ENCODE measurements at regions of chr12 and their contacts with region 1.

Region 1: GRCh38 chr12:113221181-113221997 is at the start of gene TPCN1:
- DNase-seq: peak; percentile 100
- H3K4me3 Mint-ChIP-seq: peak within 1 kb of the TSS; percentile 95
- H3K27ac Mint-ChIP-seq: peak within 1 kb of the TSS; percentile 92
- H3K4me1 Mint-ChIP-seq: peaks cover 19% of the 10 kb centered on the region
- H3K27me3 Mint-ChIP-seq: no peaks in the 10 kb centered on the region
- CTCF ChIP-seq: no peak
- total RNA-seq, gene TPCN1: 42.7 and 43.0 TPM in 2 replicates

Region 2: GRCh38 chr12:113184900-113185773 is 36.3 kb before region 1 on chr12 and contains the starts of genes DDX54 and RITA1:
- CTCF ChIA-PET with region 1: no interaction called
- POLR2A ChIA-PET with region 1: interaction called, 32 read pairs
- intact Hi-C with region 1: no loop called
- DNase-seq: peak; percentile 91
- H3K4me3 Mint-ChIP-seq: peak within 1 kb of the TSS; percentile 91
- H3K27ac Mint-ChIP-seq: peak within 1 kb of the TSS; percentile 94
- H3K4me1 Mint-ChIP-seq: peaks cover 15% of the 10 kb centered on the region
- H3K27me3 Mint-ChIP-seq: no peaks in the 10 kb centered on the region
- CTCF ChIP-seq: no peak
- total RNA-seq, gene DDX54: 67.3 and 75.8 TPM in 2 replicates
- total RNA-seq, gene RITA1: 17.5 and 17.9 TPM in 2 replicates

Region 3: GRCh38 chr12:113196996-113197395 is 24.4 kb before region 1 on chr12:
- CTCF ChIA-PET with region 1: interaction called, 5 read pairs
- POLR2A ChIA-PET with region 1: interaction called, 32 read pairs
- intact Hi-C with region 1: no loop called
- DNase-seq: peak; percentile 88
- H3K4me3 Mint-ChIP-seq: no peak overlapping the region
- H3K27ac Mint-ChIP-seq: no peak overlapping the region
- H3K4me1 Mint-ChIP-seq: peaks cover 15% of the 10 kb centered on the region
- H3K27me3 Mint-ChIP-seq: no peaks in the 10 kb centered on the region
- CTCF ChIP-seq: peak; percentile 66

Region 4: GRCh38 chr12:113241191-113242025 is 20.0 kb after region 1 on chr12:
- CTCF ChIA-PET with region 1: interaction called, 5 read pairs
- POLR2A ChIA-PET with region 1: interaction called, 237 read pairs
- intact Hi-C with region 1: loop called (anchors 1 kb)
- DNase-seq: peak; percentile 92
- H3K4me3 Mint-ChIP-seq: peak overlapping the region; percentile 56
- H3K27ac Mint-ChIP-seq: peak overlapping the region; percentile 95
- H3K4me1 Mint-ChIP-seq: peaks cover 59% of the 10 kb centered on the region
- H3K27me3 Mint-ChIP-seq: no peaks in the 10 kb centered on the region
- CTCF ChIP-seq: no peak

Region 5: DNA sequence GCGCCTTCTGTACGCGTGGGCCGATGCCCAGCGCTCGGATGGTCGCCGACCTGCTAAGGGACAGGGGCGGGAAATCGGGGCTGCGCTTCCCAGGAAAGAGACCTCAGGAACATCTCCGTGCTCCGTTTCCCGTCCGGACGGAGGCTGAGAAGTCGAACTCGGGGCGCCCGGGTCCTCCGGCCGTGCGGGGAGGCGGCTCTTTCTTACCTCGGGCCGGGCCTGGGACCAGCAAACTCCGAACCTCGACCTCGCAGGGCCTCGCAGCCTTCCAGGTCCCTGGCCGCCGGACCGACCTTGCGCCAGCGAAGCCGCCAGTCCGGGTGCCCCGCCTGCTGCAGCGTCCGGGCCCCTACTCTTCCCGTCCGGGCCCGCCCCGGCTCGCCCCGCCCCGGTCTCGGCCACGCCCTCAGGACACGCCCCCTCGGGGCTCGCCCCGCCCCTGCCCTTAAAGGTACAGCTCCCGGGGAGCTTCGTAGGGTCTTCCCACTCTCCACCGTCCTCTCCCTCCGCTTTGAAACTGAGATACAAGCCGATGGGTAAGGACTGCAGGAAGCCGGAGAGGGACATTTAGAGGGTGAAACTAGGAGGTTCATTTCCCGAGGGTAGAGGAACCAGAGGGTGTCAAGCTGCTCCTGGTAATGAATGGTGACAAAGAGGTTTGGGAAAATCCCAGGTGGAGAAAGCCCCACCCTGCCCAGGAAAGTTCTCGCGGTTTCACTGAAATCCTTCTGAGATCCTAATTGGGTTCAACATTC is 113.6 kb after region 1 on chr12 and contains the start of gene SLC8B1:
- CTCF ChIA-PET with region 1: no interaction called
- POLR2A ChIA-PET with region 1: interaction called, 6 read pairs
- intact Hi-C with region 1: loop called (anchors 10 kb)
- DNase-seq: peak; percentile 85
- H3K4me3 Mint-ChIP-seq: peak within 1 kb of the TSS; percentile 81
- H3K27ac Mint-ChIP-seq: peak within 1 kb of the TSS; percentile 75
- H3K4me1 Mint-ChIP-seq: peaks cover under 1% of the 10 kb centered on the region
- H3K27me3 Mint-ChIP-seq: no peaks in the 10 kb centered on the region
- CTCF ChIP-seq: no peak
- total RNA-seq, gene SLC8B1: 15.7 and 19.6 TPM in 2 replicates

Measured in MCF 10A (cell line).